Left cardiac atrium (tissue), 4 donors: ENCODE measurements at regions of chr13 and their contacts with region 1.

Region 1: DNA sequence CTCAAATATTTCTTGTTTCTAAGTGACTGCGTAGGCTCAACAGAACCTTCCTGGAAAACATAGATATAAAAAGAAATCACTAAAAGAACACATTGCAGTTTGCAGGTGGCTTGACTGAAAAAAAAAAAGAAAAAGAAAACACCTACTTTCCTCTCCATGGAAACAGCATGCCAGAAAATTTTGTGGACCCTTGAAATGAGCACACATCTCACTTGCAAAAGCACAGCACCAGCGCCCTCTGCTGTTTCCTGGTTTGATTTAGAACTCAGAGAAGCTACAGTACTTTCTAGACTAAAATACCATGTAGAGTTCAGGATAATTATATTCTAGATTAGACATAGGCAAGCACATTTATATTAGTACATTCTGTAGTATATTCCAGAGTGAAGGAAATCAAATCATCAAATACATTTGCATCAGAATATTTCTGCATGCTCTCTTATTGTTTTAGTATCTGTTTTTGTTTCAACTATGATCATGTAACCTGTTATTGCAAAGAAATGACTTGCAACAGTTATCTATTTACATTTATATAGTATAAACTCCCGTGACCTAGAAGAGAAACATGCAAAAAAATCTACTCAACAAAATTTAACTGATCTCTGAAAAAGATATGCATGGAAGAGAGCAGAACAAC is 22.3 kb upstream of the XPO4 start:
- DNase-seq: peak; percentile 88
- ATAC-seq: peak; percentile 56 to 70

Region 2: DNA sequence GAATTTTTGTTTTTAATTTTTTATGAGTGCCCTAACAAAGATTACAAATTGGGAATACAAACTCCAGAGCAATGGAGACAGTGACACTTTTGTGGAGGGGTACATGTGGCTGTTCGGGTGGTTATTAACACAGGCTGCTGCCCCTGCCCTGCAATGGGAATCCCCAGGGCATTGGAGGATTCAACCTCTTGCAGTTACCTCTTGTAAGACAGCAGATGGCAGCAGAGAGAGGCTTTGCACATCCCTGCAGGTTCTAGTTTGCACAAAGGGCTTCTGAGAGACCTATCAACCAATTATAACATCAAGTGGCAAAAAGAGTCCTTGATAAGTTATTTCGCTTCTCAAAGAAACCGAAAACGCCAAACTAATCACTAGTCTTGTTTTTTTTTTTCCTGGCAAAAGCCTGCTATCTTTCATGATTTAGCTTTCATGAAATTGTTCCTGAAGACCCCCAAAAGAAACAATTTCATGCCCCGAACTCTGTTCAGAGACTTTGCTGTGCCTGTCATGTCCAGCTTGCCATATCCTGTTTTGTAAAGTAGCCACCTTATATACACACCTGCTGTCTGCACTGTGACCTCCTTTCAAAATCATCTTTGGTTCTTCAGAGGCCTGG is 742.5 kb before region 1 on chr13:
- intact Hi-C with region 1: loop called in 1 of 2 experiments (anchors 5 kb)
- DNase-seq: no peak
- ATAC-seq: peak; percentile 82 to 84

Region 3: GRCh38 chr13:20197361-20197834 is 727.5 kb before region 1 on chr13:
- intact Hi-C with region 1: loop called in 1 of 2 experiments (anchors 10 kb)
- DNase-seq: no peak
- ATAC-seq: peak in 1 of 2 donors; percentile 19

Region 4: DNA sequence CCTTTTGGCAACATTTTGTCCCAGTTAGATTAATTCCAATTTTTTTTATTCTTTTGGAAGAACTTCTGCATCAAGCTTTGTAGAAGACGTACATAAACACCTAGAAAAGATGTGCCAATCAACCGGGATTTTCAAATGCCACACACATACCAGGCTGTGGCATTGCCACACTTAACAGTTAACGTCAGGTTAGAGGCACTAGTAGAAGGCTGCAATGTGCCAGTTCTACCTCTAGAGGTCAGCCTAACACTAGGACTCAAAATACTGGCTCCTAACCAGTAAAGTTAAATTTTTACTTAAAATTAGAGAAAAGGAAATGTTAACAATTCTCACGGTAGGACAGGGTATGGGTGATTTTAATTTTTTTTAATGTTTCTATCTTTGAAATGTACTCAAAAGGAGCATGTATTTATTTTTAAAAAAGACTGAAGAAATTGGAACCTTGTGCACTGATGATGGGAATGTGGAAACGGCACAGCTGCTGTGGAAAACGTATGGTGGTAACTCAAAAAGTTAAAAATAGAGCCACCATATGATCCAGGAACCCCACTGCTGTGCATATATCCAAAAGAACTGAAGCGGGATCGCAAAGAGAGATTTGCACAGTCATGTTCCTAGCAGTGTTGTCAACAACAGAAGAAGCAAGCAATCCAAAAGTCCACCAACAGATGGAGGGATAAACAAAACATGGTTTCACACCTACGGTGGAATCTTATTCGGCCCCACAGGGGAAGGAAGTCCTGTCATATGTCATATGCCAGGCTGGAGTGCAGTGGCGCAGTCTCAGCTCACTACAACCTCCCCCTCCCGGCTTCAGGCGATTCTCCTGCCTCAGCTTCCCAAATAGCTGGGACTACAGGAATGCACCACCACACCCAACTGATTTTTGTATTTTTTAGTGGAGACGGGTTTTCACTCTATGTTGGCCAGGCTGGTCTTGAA is 429.5 kb before region 1 on chr13:
- intact Hi-C with region 1: loop called (anchors 5 to 10 kb)
- DNase-seq: no peak
- ATAC-seq: peak; percentile 85 to 86

Region 5: GRCh38 chr13:20713751-20714150 is 211.1 kb before region 1 on chr13:
- intact Hi-C with region 1: loop called (anchors 2 to 5 kb)
- DNase-seq: peak; percentile 59
- ATAC-seq: peak; percentile 9 to 72